Activated T-helper 2 cell treated with anti-CD3 and anti-CD28 coated beads, Interferon-gamma antibody, Interleukin-2, Interleukin-4, amounts not matched to agents 10 μg/mL and 5 μg/mL and 100 μg/mL, durations not matched to agents 14 hours and 24 hours and 36 hours (primary cell): ENCODE measurements at regions of chr4 and their contacts with region 1.

Region 1: DNA sequence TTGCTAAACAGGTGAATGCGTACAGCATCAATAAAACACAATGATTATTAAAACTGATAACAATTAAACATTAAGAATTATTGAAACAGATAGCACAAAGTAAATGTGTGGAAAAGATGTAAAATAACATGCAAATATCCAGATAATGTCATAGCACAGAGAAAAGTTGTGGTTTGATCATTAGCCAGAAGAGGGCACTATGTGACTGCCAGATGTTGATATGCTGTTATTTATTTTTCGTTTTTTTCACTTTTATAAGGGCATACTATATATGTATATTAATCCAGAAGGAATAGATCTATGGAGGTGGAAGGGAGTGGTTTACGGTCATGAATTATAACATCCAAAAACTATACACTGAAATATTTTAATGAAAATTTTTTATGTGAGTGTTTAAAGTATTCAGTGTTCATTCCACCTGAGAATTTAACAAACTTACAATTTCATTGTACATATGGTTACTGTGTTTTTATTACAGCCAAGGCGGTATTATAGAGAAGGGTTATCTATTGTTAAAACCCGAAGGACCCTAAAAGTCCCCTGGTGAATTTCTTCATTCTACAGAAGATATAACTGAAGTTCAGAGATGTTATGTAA is 211.9 kb upstream of the UGT8 start:
- DNase-seq: no peak
- H3K4me3 Mint-ChIP-seq: no peak overlapping the region
- H3K27ac Mint-ChIP-seq: no peak overlapping the region
- H3K4me1 Mint-ChIP-seq: no peaks in the 10 kb centered on the region
- H3K27me3 Mint-ChIP-seq: peaks cover 3% of the 10 kb centered on the region

Region 2: DNA sequence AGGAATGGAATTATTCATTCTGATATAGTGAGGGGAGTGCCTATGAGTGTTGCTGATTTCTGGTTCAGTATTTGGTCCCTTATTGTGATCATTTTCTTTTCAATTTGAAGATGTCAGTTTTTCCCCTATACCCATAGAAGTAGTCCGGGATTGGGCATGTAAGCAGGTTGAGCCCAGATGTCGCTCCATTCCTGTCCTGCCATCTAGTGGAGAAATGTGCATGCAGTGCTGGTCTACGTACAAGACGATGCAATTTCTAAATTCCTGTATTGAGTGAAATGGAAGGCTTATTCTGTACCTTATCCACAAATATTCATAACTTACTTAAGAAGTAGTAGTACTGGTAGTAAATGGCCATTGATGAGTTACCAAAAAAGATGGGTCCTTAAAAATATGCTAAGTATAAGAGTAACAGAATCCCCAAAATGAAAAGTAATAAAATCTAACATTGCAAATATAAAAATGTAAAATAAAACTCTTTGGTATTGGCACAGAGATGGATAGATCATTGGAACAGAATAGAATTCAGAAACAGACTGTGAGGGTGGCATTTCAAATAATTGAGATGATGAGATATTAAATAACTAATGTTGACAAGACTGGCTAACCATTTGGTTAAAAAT is 272.8 kb after region 1 on chr4:
- intact Hi-C with region 1: loop called (anchors 2 kb)
- DNase-seq: peak; percentile 8
- H3K4me3 Mint-ChIP-seq: no peak overlapping the region
- H3K27ac Mint-ChIP-seq: no peak overlapping the region
- H3K4me1 Mint-ChIP-seq: no peaks in the 10 kb centered on the region
- H3K27me3 Mint-ChIP-seq: peaks cover 3% of the 10 kb centered on the region

Region 3: GRCh38 chr4:114694770-114695169 is 308.0 kb after region 1 on chr4:
- intact Hi-C with region 1: loop called (anchors 2 kb)
- DNase-seq: no peak
- H3K4me3 Mint-ChIP-seq: no peak overlapping the region
- H3K27ac Mint-ChIP-seq: no peak overlapping the region
- H3K4me1 Mint-ChIP-seq: no peaks in the 10 kb centered on the region
- H3K27me3 Mint-ChIP-seq: peaks cover 2% of the 10 kb centered on the region

Region 4: DNA sequence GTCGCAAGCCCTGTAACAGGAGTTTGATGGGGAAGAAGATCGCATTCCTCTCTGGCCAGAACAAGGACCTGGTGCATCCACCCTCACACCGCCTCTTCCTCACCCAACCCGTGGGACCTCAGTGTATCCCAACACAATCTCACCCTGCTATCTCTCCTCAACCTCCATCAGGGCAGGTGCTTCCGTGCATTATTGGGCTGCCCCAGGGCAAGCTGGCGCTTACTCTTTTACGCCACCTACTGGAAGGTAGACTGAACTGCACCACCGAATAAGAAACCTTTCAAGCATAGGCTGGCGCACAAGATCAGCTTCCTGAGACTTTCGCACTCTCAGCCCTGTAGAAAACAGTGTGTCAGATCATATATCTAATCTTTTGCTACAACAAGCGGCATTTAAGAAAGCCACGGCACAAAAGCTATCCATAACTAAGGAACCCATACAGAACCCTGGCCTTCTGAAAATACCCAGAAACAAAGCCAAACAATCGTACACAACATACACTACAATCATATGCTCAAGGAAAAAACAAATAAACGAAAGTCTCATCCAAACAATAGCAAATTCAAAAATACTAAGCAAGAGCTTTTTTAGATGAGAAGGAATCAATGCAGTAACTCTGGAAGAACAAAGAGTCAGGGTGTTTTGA is 421.1 kb after region 1 on chr4:
- intact Hi-C with region 1: loop called (anchors 5 kb)
- DNase-seq: peak; percentile 13
- H3K4me3 Mint-ChIP-seq: no peak overlapping the region
- H3K27ac Mint-ChIP-seq: no peak overlapping the region
- H3K4me1 Mint-ChIP-seq: no peaks in the 10 kb centered on the region
- H3K27me3 Mint-ChIP-seq: no peaks in the 10 kb centered on the region